Caco-2 (cell line): ENCODE measurements at regions of chr5 and their contacts with region 1.

Region 1: GRCh38 chr5:141734501-141735230 is 52.6 kb upstream of the ARAP3 start:
- DNase-seq: peak; percentile 76 to 82
- H3K4me3 ChIP-seq: no peak overlapping the region
- H3K4me3 Mint-ChIP-seq: no peak overlapping the region
- H3K27ac Mint-ChIP-seq: no peak overlapping the region
- H3K4me1 ChIP-seq: peaks cover 18% of the 10 kb centered on the region
- H3K4me1 Mint-ChIP-seq: peaks cover 14% of the 10 kb centered on the region
- H3K27me3 ChIP-seq: no peaks in the 10 kb centered on the region
- H3K27me3 Mint-ChIP-seq: peaks cover 7% of the 10 kb centered on the region
- CTCF ChIP-seq: no peak

Region 2: DNA sequence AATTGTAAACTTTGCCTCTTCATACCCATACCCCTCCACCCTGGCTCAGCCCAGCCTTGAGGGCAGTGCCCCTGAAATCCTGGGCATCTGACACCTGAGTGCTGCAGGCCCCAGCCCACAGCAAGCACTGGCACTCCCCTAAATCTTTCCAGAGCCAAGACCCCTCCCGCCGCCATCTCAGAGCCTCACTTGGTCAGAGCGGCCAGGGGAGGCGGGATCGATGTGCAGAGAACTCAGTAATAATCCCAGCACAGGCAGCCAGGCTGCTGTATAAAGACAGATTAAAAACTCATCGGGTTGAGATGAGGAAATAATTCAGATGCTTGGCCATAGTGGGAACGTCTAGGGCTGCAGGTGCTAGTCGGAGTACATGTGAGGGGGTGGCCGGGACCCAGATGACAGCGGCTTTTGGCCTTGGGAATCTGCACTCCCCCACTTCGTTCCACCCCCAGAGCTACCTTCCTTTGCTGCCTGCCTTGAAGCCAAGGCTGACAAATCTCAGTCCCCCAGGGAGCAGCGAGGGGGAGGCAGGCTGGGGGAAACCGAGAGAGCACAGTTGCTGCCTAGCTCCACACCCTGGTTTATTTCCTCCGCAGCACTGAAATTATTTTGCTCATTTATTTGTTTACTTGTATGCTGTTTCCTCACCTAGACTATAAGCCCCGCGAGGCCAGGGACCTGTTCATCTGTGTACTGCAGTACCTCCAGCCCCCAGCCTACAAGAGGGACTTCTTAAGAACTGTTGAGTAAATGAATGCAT is 33.1 kb before region 1 on chr5:
- CTCF ChIA-PET with region 1: interaction called, 6 read pairs
- POLR2A ChIA-PET with region 1: no interaction called
- intact Hi-C with region 1: loop called (anchors 5 kb)
- DNase-seq: no peak
- H3K4me3 ChIP-seq: no peak overlapping the region
- H3K4me3 Mint-ChIP-seq: no peak overlapping the region
- H3K27ac Mint-ChIP-seq: no peak overlapping the region
- H3K4me1 ChIP-seq: peaks cover 15% of the 10 kb centered on the region
- H3K4me1 Mint-ChIP-seq: no peaks in the 10 kb centered on the region
- H3K27me3 ChIP-seq: peaks cover 1% of the 10 kb centered on the region; the same call in 1 of the 2 replicates
- H3K27me3 Mint-ChIP-seq: peaks cover 25% of the 10 kb centered on the region
- CTCF ChIP-seq: no peak

Region 3: DNA sequence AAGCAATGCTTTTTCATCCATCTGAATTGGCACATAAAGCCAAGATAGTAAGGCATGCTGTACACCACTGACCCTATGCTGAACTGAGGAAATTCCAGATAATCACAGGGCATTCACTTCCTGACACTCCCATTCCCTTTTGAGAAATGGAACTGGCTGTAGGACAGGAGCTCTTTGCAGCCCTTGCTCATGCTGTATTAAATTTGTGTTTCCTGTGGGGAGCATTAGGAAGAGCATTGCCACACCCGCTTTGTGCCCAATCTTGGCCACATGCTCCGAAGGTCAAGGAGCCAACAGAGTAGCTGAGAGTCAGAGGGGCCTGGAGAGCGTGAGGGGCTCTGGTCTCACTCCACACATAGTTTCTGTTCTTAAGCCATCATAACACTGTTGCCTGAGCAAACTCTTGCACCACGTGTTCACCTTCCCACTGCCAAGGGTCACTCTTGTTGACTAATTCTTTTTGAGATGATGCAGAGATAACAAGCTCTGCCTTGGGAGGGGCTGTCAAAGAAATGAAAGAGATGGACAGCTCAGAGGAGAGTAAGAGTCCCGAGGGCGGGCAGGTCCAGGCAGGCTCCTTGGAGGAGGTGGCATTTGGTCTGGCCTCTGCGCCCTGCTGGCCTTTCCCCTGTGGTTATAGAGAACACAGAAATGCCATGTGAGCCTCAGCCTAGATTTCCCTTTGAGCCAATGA is 20.9 kb before region 1 on chr5:
- CTCF ChIA-PET with region 1: no interaction called
- POLR2A ChIA-PET with region 1: no interaction called
- intact Hi-C with region 1: loop called (anchors 1 kb)
- DNase-seq: peak; percentile 74 to 90
- H3K4me3 ChIP-seq: no peak overlapping the region
- H3K4me3 Mint-ChIP-seq: peak overlapping the region; percentile 46
- H3K27ac Mint-ChIP-seq: peak overlapping the region; percentile 38
- H3K4me1 ChIP-seq: peaks cover 40% of the 10 kb centered on the region
- H3K4me1 Mint-ChIP-seq: peaks cover 28% of the 10 kb centered on the region
- H3K27me3 ChIP-seq: no peaks in the 10 kb centered on the region
- H3K27me3 Mint-ChIP-seq: no peaks in the 10 kb centered on the region
- CTCF ChIP-seq: no peak

Region 4: GRCh38 chr5:141757402-141757801 is 22.7 kb after region 1 on chr5:
- CTCF ChIA-PET with region 1: interaction called, 5 read pairs
- POLR2A ChIA-PET with region 1: no interaction called
- intact Hi-C with region 1: loop called (anchors 1 kb)
- DNase-seq: peak; percentile 58 to 63
- H3K4me3 ChIP-seq: no peak overlapping the region
- H3K4me3 Mint-ChIP-seq: no peak overlapping the region
- H3K27ac Mint-ChIP-seq: peak overlapping the region; percentile 2
- H3K4me1 ChIP-seq: peaks cover 7% of the 10 kb centered on the region
- H3K4me1 Mint-ChIP-seq: peaks cover 20% of the 10 kb centered on the region
- H3K27me3 ChIP-seq: no peaks in the 10 kb centered on the region
- H3K27me3 Mint-ChIP-seq: peaks cover 9% of the 10 kb centered on the region
- CTCF ChIP-seq: peak; percentile 20 to 50